Psoas muscle (tissue), 8 donors: ENCODE measurements at regions of chr4 and their contacts with region 1.

Region 1: DNA sequence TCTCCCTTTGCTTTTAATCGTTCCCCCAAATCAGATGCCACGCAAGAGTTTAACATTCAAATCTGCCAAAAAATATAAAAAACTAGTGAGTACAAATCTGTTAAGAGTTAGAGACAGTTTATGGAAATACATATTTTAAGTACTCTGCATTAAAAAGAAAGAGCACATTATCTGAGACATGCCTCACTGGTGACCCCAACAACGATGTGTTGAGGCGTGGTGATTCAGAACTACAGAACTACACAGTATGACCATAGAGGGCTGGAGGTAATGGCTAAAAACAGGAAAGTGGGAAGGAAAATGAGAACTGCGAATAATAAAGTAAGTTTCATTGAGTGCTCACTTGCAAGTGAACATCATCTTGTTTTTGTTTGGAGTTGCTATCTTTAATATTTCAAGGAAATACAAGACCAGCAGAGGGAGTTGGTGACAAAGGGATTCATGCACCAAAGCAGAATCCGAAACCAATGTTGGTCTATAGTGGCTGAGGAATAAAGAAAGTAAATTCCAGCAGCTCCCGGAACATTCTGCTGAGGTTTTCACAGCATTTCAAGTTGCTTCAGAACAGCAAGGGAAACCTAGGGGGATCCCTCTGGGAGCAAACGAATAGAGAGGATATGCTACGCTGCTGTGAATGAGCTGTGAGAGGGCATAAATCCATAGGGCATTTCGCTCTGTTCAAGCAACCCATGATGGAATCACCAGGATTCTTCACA is 92.2 kb downstream of the DCHS2 start:
- DNase-seq: no peak
- ATAC-seq: peak in 1 of 4 donors; percentile 53
- H3K4me3 ChIP-seq: peak overlapping the region; percentile 45
- H3K27ac ChIP-seq: no peak overlapping the region
- H3K4me1 ChIP-seq: no peaks in the 10 kb centered on the region
- H3K27me3 ChIP-seq: no peaks in the 10 kb centered on the region
- CTCF ChIP-seq: no peak

Region 2: GRCh38 chr4:154506253-154506652 is 106.8 kb after region 1 on chr4:
- intact Hi-C with region 1: loop called in 1 of 2 experiments (anchors 5 kb)
- DNase-seq: no peak
- ATAC-seq: no peak
- H3K4me3 ChIP-seq: no peak overlapping the region
- H3K27ac ChIP-seq: no peak overlapping the region
- H3K4me1 ChIP-seq: no peaks in the 10 kb centered on the region
- H3K27me3 ChIP-seq: peaks cover 0 to 3% (median 0%) of the 10 kb centered on the region in 3 donors
- CTCF ChIP-seq: peak; percentile 26